ENCODE measurements at regions of chr10 and their contacts with region 1.

Region 1: GRCh38 chr10:59885430-59886134 is 20.8 kb downstream of the CCDC6 start:
- DNase-seq: no peak
- H3K4me3 Mint-ChIP-seq: peak overlapping the region; percentile 40
- H3K27ac Mint-ChIP-seq: peak overlapping the region; percentile 83
- H3K4me1 Mint-ChIP-seq: peaks cover 75% of the 10 kb centered on the region
- H3K27me3 Mint-ChIP-seq: no peaks in the 10 kb centered on the region

Region 2: DNA sequence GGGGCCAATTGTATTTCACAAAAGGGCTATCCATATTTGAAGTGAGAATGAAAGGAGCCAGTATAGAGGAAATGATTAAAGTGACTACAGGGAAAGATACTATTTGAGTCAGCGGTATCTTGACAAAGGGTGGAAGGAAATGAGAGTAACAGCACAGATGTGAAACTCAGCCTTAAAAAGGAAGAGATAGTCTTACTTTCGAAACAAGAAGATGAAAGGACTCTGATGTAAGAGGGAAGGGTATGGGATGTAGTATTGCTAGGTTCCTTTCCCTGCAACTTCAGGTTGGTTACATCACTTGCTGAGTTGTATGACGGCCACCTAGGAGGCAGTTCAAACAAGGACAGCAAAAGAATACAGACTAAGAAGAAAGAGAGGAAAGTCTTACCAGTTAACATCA is 1603.0 kb before region 1 on chr10:
- intact Hi-C with region 1: loop called (anchors 5 kb)
- DNase-seq: peak; percentile 32
- H3K4me3 Mint-ChIP-seq: peak overlapping the region; percentile 38
- H3K27ac Mint-ChIP-seq: peak overlapping the region; percentile 1
- H3K4me1 Mint-ChIP-seq: peaks cover 31% of the 10 kb centered on the region
- H3K27me3 Mint-ChIP-seq: no peaks in the 10 kb centered on the region

Region 3: GRCh38 chr10:59817773-59818172 is 67.8 kb before region 1 on chr10:
- intact Hi-C with region 1: no loop called
- DNase-seq: no peak
- H3K4me3 Mint-ChIP-seq: no peak overlapping the region
- H3K27ac Mint-ChIP-seq: peak overlapping the region; percentile 28
- H3K4me1 Mint-ChIP-seq: peaks cover 37% of the 10 kb centered on the region
- H3K27me3 Mint-ChIP-seq: no peaks in the 10 kb centered on the region

Region 4: GRCh38 chr10:59865101-59865500 is 20.5 kb before region 1 on chr10:
- intact Hi-C with region 1: loop called (anchors 1 kb)
- DNase-seq: no peak
- H3K4me3 Mint-ChIP-seq: no peak overlapping the region
- H3K27ac Mint-ChIP-seq: no peak overlapping the region
- H3K4me1 Mint-ChIP-seq: peaks cover 41% of the 10 kb centered on the region
- H3K27me3 Mint-ChIP-seq: no peaks in the 10 kb centered on the region

Region 5: GRCh38 chr10:59898125-59898835 is 12.7 kb after region 1 on chr10:
- intact Hi-C with region 1: loop called (anchors 1 kb)
- DNase-seq: no peak
- H3K4me3 Mint-ChIP-seq: no peak overlapping the region
- H3K27ac Mint-ChIP-seq: no peak overlapping the region
- H3K4me1 Mint-ChIP-seq: peaks cover 50% of the 10 kb centered on the region
- H3K27me3 Mint-ChIP-seq: no peaks in the 10 kb centered on the region

Region 6: GRCh38 chr10:60778214-60779029 is 892.8 kb after region 1 on chr10 and contains the start of gene CDK1:
- intact Hi-C with region 1: loop called (anchors 10 kb)
- DNase-seq: peak; percentile 98
- H3K4me3 Mint-ChIP-seq: peak within 1 kb of the TSS; percentile 100
- H3K27ac Mint-ChIP-seq: peak within 1 kb of the TSS; percentile 98
- H3K4me1 Mint-ChIP-seq: peaks cover 38% of the 10 kb centered on the region
- H3K27me3 Mint-ChIP-seq: no peaks in the 10 kb centered on the region
- total RNA-seq, gene CDK1: 89.1 and 91.4 TPM in 2 replicates